Transverse colon (tissue), 4 donors: ENCODE measurements at regions of chr18 and their contacts with region 1.

Region 1: GRCh38 chr18:5909130-5909529 is 13.8 kb upstream of the TMEM200C start:
- DNase-seq: no peak
- H3K4me3 ChIP-seq: no peak overlapping the region
- H3K27ac ChIP-seq: no peak overlapping the region
- H3K4me1 ChIP-seq: no peaks in the 10 kb centered on the region
- H3K27me3 ChIP-seq: no peaks in the 10 kb centered on the region
- CTCF ChIP-seq: no peak
- EP300 ChIP-seq: no peak
- POLR2A ChIP-seq: no peak

Region 2: GRCh38 chr18:5365443-5365842 is 543.7 kb before region 1 on chr18:
- in situ Hi-C with region 1: no loop called
- intact Hi-C with region 1: no loop called
- DNase-seq: no peak
- H3K4me3 ChIP-seq: no peak overlapping the region
- H3K27ac ChIP-seq: no peak overlapping the region
- H3K4me1 ChIP-seq: no peaks in the 10 kb centered on the region
- H3K27me3 ChIP-seq: no peaks in the 10 kb centered on the region
- CTCF ChIP-seq: no peak
- EP300 ChIP-seq: no peak
- POLR2A ChIP-seq: no peak

Region 3: DNA sequence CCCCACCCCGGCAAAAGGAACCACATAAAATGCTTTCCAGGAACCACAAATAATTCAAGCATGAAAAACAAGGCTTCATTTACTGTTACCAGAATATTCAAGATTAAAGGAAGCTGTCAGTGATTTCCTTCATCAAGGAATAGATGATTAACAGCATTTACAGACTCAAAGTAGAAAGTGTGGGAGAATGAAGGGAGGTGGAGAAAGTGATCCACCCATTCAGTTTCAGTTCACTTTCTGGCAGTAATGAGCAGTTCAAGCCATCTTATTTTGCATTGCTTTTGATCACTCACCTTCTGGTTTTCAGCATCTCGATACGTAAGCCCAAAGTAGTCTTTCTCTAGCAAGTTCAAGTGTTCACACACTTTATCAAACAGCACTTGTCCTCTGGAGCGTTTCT is 464.3 kb before region 1 on chr18:
- in situ Hi-C with region 1: no loop called
- intact Hi-C with region 1: no loop called
- DNase-seq: no peak
- H3K4me3 ChIP-seq: no peak overlapping the region
- H3K27ac ChIP-seq: no peak overlapping the region
- H3K4me1 ChIP-seq: no peaks in the 10 kb centered on the region
- H3K27me3 ChIP-seq: no peaks in the 10 kb centered on the region
- CTCF ChIP-seq: no peak
- EP300 ChIP-seq: no peak
- POLR2A ChIP-seq: no peak

Region 4: GRCh38 chr18:5841518-5841917 is 67.6 kb before region 1 on chr18:
- in situ Hi-C with region 1: no loop called
- intact Hi-C with region 1: no loop called
- DNase-seq: no peak
- H3K4me3 ChIP-seq: no peak overlapping the region
- H3K27ac ChIP-seq: no peak overlapping the region
- H3K4me1 ChIP-seq: no peaks in the 10 kb centered on the region
- H3K27me3 ChIP-seq: no peaks in the 10 kb centered on the region
- CTCF ChIP-seq: no peak
- EP300 ChIP-seq: no peak
- POLR2A ChIP-seq: no peak

Region 5: DNA sequence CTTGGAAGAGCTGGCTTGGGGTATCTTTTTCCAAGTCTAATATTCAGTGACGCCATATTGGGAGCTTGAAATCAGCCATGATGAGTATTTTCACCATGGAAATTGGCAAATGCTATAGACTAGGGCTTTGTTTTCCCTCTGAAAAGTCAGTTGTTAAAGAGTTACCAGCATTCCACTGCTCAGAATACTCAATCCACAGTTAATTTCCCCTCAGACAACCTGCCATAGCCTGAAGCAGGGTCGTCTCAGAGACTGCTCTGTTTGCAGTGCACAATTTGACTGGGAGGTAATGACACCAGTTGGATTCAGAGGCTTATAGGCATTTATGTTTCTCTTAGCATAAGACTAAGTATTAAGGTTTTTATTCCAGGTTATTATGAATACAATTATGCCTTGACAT is 21.7 kb after region 1 on chr18:
- in situ Hi-C with region 1: no loop called
- intact Hi-C with region 1: loop called (anchors 1 kb)
- DNase-seq: no peak
- H3K4me3 ChIP-seq: no peak overlapping the region
- H3K27ac ChIP-seq: no peak overlapping the region
- H3K4me1 ChIP-seq: no peaks in the 10 kb centered on the region
- H3K27me3 ChIP-seq: no peaks in the 10 kb centered on the region
- CTCF ChIP-seq: no peak
- EP300 ChIP-seq: no peak
- POLR2A ChIP-seq: no peak

Region 6: GRCh38 chr18:6150430-6150829 is 241.3 kb after region 1 on chr18:
- in situ Hi-C with region 1: no loop called
- intact Hi-C with region 1: no loop called
- DNase-seq: no peak
- H3K4me3 ChIP-seq: no peak overlapping the region
- H3K27ac ChIP-seq: no peak overlapping the region
- H3K4me1 ChIP-seq: no peaks in the 10 kb centered on the region
- H3K27me3 ChIP-seq: no peaks in the 10 kb centered on the region
- CTCF ChIP-seq: no peak
- EP300 ChIP-seq: no peak
- POLR2A ChIP-seq: no peak